MCF 10A (cell line): ENCODE measurements at regions of chr3 and their contacts with region 1.

Region 1: GRCh38 chr3:57998366-57999283 is 9.6 kb upstream of the FLNB start:
- DNase-seq: no peak
- H3K4me3 Mint-ChIP-seq: peak overlapping the region; percentile 52
- H3K27ac Mint-ChIP-seq: peak overlapping the region; percentile 92
- H3K4me1 Mint-ChIP-seq: peaks cover 30% of the 10 kb centered on the region
- H3K27me3 Mint-ChIP-seq: no peaks in the 10 kb centered on the region
- CTCF ChIP-seq: no peak

Region 2: DNA sequence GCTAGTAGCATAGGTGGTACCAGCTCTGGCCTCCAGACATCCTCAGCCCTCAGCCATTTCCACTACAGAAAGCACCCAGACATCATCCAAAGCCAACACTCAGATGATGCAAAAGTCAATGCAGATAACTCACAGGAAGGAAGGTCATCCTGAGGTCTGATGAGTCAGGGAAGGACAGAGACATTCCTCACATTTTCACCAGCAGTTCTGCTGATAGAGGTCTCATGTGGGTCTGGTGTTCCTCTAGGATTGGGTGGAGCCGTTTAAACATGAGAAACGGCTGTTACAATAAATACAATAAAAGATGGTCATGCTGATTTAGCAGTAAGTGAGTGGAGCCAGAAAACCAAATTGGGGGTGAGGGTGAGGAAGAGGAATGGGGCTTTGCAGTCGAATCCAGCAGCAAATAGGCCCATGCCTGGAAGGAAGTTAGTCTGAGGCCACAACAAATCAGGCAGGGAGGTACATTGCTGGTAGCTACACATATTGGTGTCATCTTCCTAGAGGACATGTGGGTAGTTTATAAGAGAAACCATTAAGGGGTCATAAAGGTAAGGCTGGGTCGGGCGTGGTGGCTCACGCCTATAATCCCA is 23.7 kb before region 1 on chr3:
- CTCF ChIA-PET with region 1: interaction called, 5 read pairs
- POLR2A ChIA-PET with region 1: interaction called, 13 read pairs
- intact Hi-C with region 1: no loop called
- DNase-seq: peak; percentile 93
- H3K4me3 Mint-ChIP-seq: peak overlapping the region; percentile 31
- H3K27ac Mint-ChIP-seq: peak overlapping the region; percentile 95
- H3K4me1 Mint-ChIP-seq: peaks cover 49% of the 10 kb centered on the region
- H3K27me3 Mint-ChIP-seq: no peaks in the 10 kb centered on the region
- CTCF ChIP-seq: no peak

Region 3: DNA sequence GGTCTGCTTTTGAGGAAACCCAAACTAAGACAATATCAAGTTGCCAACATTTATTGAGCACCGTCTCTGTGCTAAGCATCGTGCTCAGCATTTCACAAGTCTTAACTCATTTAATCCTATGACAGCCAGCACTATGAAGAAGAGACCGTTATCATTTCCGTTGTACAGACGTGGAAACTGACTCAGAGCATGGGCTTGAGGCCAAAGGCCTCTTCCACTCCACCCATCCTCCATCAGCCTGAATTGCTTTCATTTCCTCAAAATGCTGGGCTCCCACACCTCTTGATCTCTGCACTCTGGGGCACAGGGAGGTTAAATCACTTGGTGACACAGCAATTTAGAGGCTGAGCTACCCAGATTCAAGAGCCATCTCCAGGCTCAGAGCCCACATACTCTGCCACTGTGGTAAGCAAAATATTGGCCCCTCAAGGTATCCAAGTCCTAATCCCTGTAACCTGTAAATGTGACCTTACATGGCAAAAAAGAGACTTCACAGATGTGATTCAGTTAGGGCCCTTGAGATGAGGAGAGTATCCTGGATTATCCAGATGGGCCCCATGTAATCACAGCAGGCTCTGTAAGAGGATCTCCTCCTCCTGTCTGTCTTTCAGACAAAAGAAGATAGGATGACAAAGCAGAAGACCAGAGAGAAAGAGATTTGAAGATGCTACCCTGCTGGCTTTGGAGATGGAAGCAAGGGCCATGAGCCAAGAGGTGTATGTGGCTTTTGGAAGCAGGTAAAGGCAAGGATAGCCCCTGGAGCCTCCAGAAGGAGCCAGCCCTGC is 14.7 kb before region 1 on chr3:
- CTCF ChIA-PET with region 1: interaction called, 4 read pairs
- POLR2A ChIA-PET with region 1: interaction called, 20 read pairs
- intact Hi-C with region 1: no loop called
- DNase-seq: peak; percentile 88
- H3K4me3 Mint-ChIP-seq: no peak overlapping the region
- H3K27ac Mint-ChIP-seq: peak overlapping the region; percentile 68
- H3K4me1 Mint-ChIP-seq: peaks cover 26% of the 10 kb centered on the region
- H3K27me3 Mint-ChIP-seq: no peaks in the 10 kb centered on the region
- CTCF ChIP-seq: no peak